ENCODE measurements at regions of chr11 and their contacts with region 1.

Region 1: DNA sequence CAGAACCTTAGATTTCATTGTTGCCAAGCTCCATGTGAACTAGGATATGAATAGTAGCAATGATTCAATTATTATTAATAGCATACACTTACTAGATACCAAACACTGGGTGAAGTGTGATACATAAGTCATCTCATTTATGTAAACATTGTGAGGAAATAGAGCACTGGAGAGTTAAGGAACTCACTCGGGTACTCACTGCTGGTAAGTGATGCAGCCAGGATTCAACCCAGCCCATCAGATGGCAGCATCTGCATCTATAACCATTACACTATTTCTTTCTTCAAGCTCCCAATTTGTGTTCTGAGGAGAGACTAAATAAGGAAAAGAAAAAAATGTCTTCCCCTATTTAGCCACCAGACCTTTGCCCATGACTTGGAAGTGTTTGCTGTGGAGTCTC is 10.2 kb upstream of the ALG8 start:
- DNase-seq: peak; percentile 92
- ATAC-seq: peak; percentile 100
- H3K4me3 ChIP-seq: no peak overlapping the region
- H3K27ac ChIP-seq: peak overlapping the region; percentile 72
- H3K4me1 ChIP-seq: peaks cover 8% of the 10 kb centered on the region
- H3K27me3 ChIP-seq: no peaks in the 10 kb centered on the region
- CTCF ChIP-seq: peak; percentile 76

Region 2: GRCh38 chr11:78188286-78189173 is 38.9 kb after region 1 on chr11 and contains the starts of genes KCTD21 and USP35:
- CTCF ChIA-PET with region 1: interaction called, 3 read pairs
- POLR2A ChIA-PET with region 1: interaction called, 3 read pairs
- intact Hi-C with region 1: loop called (anchors 1 kb)
- DNase-seq: peak; percentile 99
- ATAC-seq: peak; percentile 94
- H3K4me3 ChIP-seq: peak within 1 kb of the TSS; percentile 97
- H3K27ac ChIP-seq: peak within 1 kb of the TSS; percentile 50
- H3K4me1 ChIP-seq: peaks cover 40% of the 10 kb centered on the region
- H3K27me3 ChIP-seq: no peaks in the 10 kb centered on the region
- CTCF ChIP-seq: no peak
- total RNA-seq, gene KCTD21: 9.4 and 13.0 TPM in 2 replicates
- total RNA-seq, gene USP35: 8.5 and 12.0 TPM in 2 replicates

Region 3: DNA sequence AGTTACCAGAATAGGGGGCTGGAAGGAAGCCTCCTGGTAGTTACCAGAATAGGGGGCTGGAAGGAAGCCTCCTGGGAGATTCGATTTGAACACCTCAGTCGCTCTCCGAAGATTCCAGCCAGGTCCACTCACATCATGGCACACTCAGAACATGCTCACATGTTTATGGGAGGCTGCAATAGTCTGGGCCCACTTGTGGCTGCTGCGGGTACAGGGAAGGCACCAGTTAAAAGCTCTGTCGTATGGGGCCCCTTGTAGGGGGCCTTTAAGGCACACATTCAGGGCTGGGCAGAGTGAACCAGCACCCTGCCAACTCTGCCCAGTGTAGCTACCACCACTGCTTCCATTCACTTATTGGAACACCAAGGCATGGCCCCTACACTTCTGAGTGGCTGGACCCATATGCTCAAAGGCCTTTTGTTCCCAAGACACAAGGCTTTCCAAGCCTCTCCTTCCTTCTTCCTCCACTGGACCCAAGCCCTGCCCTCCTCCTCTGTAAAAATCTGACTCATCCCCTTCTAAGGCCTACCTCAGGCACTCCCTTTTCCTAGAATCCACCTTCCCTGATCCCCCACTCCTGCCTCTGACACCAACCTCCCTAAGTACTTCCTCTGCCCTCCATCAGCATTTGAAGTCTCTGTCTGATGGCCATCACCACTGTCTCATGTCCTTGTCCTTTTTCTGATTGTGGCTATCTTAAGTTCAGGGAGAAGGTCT is 67.1 kb after region 1 on chr11:
- CTCF ChIA-PET with region 1: no interaction called
- POLR2A ChIA-PET with region 1: no interaction called
- intact Hi-C with region 1: loop called (anchors 1 kb)
- DNase-seq: peak; percentile 66
- ATAC-seq: peak; percentile 97
- H3K4me3 ChIP-seq: no peak overlapping the region
- H3K27ac ChIP-seq: peak overlapping the region; percentile 34
- H3K4me1 ChIP-seq: peaks cover 11% of the 10 kb centered on the region
- H3K27me3 ChIP-seq: no peaks in the 10 kb centered on the region
- CTCF ChIP-seq: no peak

Region 4: DNA sequence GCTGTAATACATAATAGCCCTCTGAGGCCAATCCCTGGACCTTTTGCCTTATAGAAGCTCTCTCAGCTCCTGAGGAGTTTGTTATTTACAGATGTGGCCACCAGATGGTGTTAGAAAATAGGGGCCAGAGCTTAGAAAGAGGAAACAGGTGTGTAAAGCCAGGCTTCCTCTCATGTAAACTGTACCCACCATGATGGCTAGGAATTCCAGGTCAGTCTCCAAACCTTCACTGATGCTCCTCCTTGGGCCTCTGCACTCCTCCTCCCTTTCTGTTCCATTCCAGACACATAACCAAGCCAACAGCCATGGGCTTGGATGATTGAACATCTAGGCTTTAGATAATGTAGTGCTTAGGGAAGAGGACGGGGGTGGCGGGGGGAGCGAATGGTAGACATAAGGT is 78.8 kb after region 1 on chr11:
- CTCF ChIA-PET with region 1: interaction called, 12 read pairs
- POLR2A ChIA-PET with region 1: no interaction called
- intact Hi-C with region 1: loop called (anchors 1 kb)
- DNase-seq: peak; percentile 86
- ATAC-seq: peak; percentile 81
- H3K4me3 ChIP-seq: no peak overlapping the region
- H3K27ac ChIP-seq: no peak overlapping the region
- H3K4me1 ChIP-seq: peaks cover 11% of the 10 kb centered on the region
- H3K27me3 ChIP-seq: no peaks in the 10 kb centered on the region
- CTCF ChIP-seq: peak; percentile 87

Region 5: DNA sequence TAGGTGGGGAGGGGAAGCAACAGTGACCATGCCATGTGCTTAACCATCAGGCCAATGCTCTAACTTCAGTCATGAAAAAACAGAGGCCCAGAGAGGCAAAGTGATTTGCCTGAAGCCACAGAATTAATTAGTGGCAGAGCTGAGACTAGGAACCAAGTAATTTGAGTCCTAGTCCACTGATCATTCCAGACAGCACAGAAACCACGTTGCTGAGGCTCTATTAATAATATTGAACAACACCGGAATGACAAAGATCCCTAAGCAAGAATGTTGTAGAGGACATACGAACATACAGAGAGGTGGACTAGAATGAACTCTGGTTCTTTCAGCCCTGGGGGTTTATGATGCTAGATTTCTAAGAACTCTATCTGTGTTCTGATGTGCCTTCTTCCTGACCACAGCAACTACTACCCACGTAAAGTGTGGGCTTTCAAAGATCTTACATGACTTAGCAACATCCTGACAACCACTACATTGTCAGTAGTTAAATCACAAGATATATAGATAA is 175.7 kb after region 1 on chr11:
- CTCF ChIA-PET with region 1: interaction called, 16 read pairs
- POLR2A ChIA-PET with region 1: no interaction called
- intact Hi-C with region 1: no loop called
- DNase-seq: no peak
- ATAC-seq: no peak
- H3K4me3 ChIP-seq: no peak overlapping the region
- H3K27ac ChIP-seq: no peak overlapping the region
- H3K4me1 ChIP-seq: no peaks in the 10 kb centered on the region
- H3K27me3 ChIP-seq: no peaks in the 10 kb centered on the region
- CTCF ChIP-seq: no peak

Region 6: DNA sequence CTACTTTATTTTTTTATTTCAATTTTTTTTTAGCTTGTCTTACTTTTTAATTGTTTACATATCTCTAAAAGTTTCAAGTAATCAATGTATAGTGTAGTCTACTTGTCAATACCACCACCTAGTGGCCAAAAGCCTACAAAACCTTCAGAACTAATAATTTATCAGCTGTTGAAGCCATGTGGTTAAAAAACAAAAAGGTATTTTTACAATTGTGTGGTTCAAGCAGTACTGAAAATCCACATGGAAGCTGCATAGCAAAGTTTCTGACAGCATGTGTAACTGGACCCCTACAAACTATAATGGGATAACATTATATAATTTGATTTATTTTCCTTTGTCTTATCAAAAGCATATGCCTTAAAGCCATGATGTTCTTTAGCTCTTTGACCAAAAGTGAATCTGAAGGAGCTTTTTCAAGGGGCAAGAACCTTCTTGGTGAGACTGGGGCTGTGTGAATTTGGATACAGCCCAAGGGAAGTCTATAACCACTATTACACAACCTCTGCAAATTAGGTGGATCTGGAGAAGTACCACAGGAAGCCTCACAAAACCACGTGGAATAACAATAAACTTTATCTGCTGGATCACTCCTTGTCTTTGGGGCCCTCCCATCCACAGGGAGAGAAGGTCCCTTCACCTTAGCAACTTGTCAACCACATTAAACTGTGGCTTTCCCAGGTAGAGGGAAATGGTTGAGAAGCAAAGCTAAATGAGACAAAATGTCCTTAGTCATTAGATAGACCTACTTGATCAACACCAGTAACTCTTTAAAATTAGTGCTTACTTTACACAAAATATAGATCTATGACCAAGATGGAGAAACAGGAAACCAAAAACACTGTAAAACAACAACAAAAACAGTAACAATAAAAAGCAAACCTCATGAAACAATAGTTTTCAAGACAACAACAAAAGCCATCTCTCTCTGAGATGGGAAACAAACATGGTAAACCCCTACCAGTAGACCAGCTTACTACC is 415.1 kb after region 1 on chr11:
- CTCF ChIA-PET with region 1: interaction called, 12 read pairs
- POLR2A ChIA-PET with region 1: no interaction called
- intact Hi-C with region 1: loop called (anchors 1 kb)
- DNase-seq: peak; percentile 91
- ATAC-seq: peak; percentile 15; the same call in 1 of the 2 replicates
- H3K4me3 ChIP-seq: no peak overlapping the region
- H3K27ac ChIP-seq: no peak overlapping the region
- H3K4me1 ChIP-seq: peaks cover 62% of the 10 kb centered on the region
- H3K27me3 ChIP-seq: no peaks in the 10 kb centered on the region
- CTCF ChIP-seq: peak; percentile 89

Measured in PC-3 (cell line).